B cell (primary cell): ENCODE measurements at regions of chr18 and their contacts with region 1.

Region 1: GRCh38 chr18:26757263-26758019 is 108.1 kb downstream of the AQP4 start:
- DNase-seq: no peak
- ATAC-seq: no peak
- H3K4me3 ChIP-seq: no peak overlapping the region
- H3K4me3 Mint-ChIP-seq: no peak overlapping the region
- H3K27ac ChIP-seq: no peak overlapping the region
- H3K27ac Mint-ChIP-seq: no peak overlapping the region
- H3K4me1 ChIP-seq: peaks cover 0 to 2% of the 10 kb centered on the region in 2 donors
- H3K4me1 Mint-ChIP-seq: peaks cover 5% of the 10 kb centered on the region
- H3K27me3 ChIP-seq: no peaks in the 10 kb centered on the region
- H3K27me3 Mint-ChIP-seq: no peaks in the 10 kb centered on the region
- CTCF ChIP-seq: no peak

Region 2: GRCh38 chr18:26487437-26487836 is 270.0 kb before region 1 on chr18:
- CTCF ChIA-PET with region 1: no interaction called
- POLR2A ChIA-PET with region 1: no interaction called
- intact Hi-C with region 1: no loop called
- DNase-seq: no peak
- ATAC-seq: no peak
- H3K4me3 ChIP-seq: no peak overlapping the region
- H3K4me3 Mint-ChIP-seq: no peak overlapping the region
- H3K27ac ChIP-seq: no peak overlapping the region
- H3K27ac Mint-ChIP-seq: no peak overlapping the region
- H3K4me1 ChIP-seq: no peaks in the 10 kb centered on the region
- H3K4me1 Mint-ChIP-seq: no peaks in the 10 kb centered on the region
- H3K27me3 ChIP-seq: no peaks in the 10 kb centered on the region
- H3K27me3 Mint-ChIP-seq: no peaks in the 10 kb centered on the region
- CTCF ChIP-seq: no peak

Region 3: GRCh38 chr18:26746279-26747150 is 10.9 kb before region 1 on chr18:
- CTCF ChIA-PET with region 1: no interaction called
- POLR2A ChIA-PET with region 1: no interaction called
- intact Hi-C with region 1: loop called (anchors 1 kb)
- DNase-seq: no peak
- ATAC-seq: no peak
- H3K4me3 ChIP-seq: no peak overlapping the region
- H3K4me3 Mint-ChIP-seq: no peak overlapping the region
- H3K27ac ChIP-seq: no peak overlapping the region
- H3K27ac Mint-ChIP-seq: no peak overlapping the region
- H3K4me1 ChIP-seq: no peaks in the 10 kb centered on the region
- H3K4me1 Mint-ChIP-seq: no peaks in the 10 kb centered on the region
- H3K27me3 ChIP-seq: no peaks in the 10 kb centered on the region
- H3K27me3 Mint-ChIP-seq: no peaks in the 10 kb centered on the region
- CTCF ChIP-seq: no peak

Region 4: DNA sequence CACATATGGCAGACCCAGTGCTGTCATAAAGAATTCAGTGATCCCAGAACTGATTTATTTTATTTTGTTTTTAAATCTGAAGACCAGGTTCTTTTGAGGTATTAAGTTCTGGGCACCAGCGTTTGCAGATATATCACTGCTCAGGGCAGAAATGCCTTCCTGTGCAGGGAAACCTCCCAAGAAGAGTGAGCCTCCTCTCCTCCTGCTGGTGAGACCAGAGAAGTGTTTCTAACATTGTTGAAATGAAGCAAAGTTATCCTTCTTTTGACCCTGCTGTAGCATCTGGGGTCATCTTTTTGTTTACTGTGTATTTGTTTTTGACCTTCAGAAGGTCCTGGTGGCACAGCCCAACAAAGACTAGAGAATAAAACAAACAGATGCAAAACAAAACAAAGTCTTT is 14.1 kb after region 1 on chr18:
- CTCF ChIA-PET with region 1: no interaction called
- POLR2A ChIA-PET with region 1: no interaction called
- intact Hi-C with region 1: no loop called
- DNase-seq: no peak
- ATAC-seq: no peak
- H3K4me3 ChIP-seq: no peak overlapping the region
- H3K4me3 Mint-ChIP-seq: no peak overlapping the region
- H3K27ac ChIP-seq: no peak overlapping the region
- H3K27ac Mint-ChIP-seq: no peak overlapping the region
- H3K4me1 ChIP-seq: no peaks in the 10 kb centered on the region
- H3K4me1 Mint-ChIP-seq: no peaks in the 10 kb centered on the region
- H3K27me3 ChIP-seq: no peaks in the 10 kb centered on the region
- H3K27me3 Mint-ChIP-seq: no peaks in the 10 kb centered on the region
- CTCF ChIP-seq: no peak

Region 5: DNA sequence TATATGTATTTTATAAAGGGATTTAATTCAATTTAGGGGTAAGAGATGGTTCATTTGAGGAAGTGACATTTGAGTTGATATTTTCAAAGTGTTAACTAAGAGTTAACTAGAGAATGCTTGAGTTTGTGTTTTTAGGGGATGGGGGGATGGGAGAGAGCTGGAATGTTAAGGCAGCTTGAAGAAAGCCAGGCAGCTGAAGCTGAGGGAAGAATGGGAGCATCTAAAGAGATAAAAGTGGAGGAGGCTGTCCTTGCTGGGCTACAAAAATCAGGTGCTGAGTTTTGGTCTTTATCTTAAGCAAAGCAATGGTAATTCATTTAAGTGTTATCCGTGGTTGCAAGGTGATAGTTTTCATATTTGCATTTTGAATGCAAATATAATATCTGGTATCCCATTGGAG is 418.5 kb after region 1 on chr18:
- CTCF ChIA-PET with region 1: no interaction called
- POLR2A ChIA-PET with region 1: no interaction called
- intact Hi-C with region 1: no loop called
- DNase-seq: no peak
- ATAC-seq: no peak
- H3K4me3 ChIP-seq: no peak overlapping the region
- H3K4me3 Mint-ChIP-seq: no peak overlapping the region
- H3K27ac ChIP-seq: no peak overlapping the region
- H3K27ac Mint-ChIP-seq: no peak overlapping the region
- H3K4me1 ChIP-seq: no peaks in the 10 kb centered on the region
- H3K4me1 Mint-ChIP-seq: no peaks in the 10 kb centered on the region
- H3K27me3 ChIP-seq: no peaks in the 10 kb centered on the region
- H3K27me3 Mint-ChIP-seq: no peaks in the 10 kb centered on the region
- CTCF ChIP-seq: no peak